GM12878 (cell line): ENCODE measurements at regions of chr1 and their contacts with region 1.

Region 1: DNA sequence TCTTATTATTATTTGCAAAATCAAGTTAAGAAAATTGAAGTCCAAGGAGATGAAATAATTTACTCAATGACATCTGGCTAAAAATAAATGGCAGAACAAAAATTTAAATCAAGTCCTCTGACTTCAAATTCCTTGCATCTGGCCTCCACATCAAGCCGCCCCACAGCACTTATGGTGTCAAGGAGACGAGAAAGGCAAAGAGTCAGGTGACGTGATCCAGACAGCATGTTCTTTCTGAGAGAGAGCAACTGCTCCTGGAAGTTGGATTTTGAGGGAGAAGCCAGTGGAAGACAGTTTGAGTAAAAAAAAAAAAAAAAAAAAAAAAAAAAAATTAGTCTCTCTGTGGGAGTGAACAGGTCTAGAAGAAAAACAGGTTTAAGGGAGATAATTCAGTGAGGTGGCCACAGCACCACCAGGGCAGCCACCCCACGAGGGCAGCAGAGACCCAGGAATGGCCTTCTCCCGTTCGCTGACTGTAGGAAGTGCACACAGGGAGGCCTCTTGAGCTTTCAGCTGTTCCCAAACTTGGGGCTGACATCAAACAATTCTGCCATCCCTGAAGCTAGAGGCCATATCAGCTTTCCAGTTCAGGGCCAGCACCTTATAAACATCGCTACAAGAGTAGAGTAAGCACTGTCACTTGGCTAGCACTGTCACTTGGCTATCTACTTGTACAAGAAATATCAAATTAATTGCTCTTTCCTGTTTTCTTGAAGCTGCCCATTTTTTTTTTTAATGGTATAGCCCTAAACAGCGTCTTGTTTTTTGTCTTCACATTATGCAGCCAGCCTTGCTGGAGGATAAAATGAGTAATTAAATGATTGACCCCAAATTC is 7.8 kb downstream of the C1orf162 start:
- DNase-seq: peak; percentile 48
- ATAC-seq: peak; percentile 88
- H3K4me3 ChIP-seq: no peak overlapping the region
- H3K27ac ChIP-seq: no peak overlapping the region
- H3K4me1 ChIP-seq: peaks cover 16% of the 10 kb centered on the region
- H3K27me3 ChIP-seq: no peaks in the 10 kb centered on the region
- CTCF ChIP-seq: peak; percentile 79 to 97 (median 83)
- EP300 ChIP-seq: no peak
- POLR2A ChIP-seq: no peak
- RAD21 ChIP-seq: peak; percentile 95

Region 2: DNA sequence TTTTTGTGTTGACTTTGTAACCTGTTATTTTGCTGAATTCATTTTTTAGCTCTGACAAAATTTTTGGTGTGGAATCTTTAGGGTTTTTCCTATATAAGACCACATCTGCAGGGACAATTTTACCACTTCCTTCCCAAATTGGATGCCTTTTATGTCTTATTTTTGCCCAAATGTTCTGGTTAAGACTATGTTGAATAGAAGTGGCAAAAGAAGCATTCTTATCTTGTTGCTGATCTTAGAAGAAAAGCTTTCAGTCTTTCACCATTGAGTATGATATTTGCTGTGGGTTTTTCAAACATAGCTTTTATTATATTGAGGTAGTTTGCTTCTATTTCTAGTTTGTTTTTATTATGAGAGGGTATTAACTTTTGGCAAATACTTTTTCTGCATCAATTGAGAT is 187.2 kb before region 1 on chr1:
- CTCF ChIA-PET with region 1: no interaction called
- POLR2A ChIA-PET with region 1: no interaction called
- RAD21 ChIA-PET with region 1: no interaction called
- SMC1A ChIA-PET with region 1: no interaction called
- in situ Hi-C with region 1: no loop called
- intact Hi-C with region 1: no loop called
- DNase-seq: no peak
- ATAC-seq: no peak
- H3K4me3 ChIP-seq: no peak overlapping the region
- H3K27ac ChIP-seq: no peak overlapping the region
- H3K4me1 ChIP-seq: no peaks in the 10 kb centered on the region
- H3K27me3 ChIP-seq: no peaks in the 10 kb centered on the region
- CTCF ChIP-seq: no peak
- EP300 ChIP-seq: no peak
- POLR2A ChIP-seq: no peak
- RAD21 ChIP-seq: no peak

Region 3: DNA sequence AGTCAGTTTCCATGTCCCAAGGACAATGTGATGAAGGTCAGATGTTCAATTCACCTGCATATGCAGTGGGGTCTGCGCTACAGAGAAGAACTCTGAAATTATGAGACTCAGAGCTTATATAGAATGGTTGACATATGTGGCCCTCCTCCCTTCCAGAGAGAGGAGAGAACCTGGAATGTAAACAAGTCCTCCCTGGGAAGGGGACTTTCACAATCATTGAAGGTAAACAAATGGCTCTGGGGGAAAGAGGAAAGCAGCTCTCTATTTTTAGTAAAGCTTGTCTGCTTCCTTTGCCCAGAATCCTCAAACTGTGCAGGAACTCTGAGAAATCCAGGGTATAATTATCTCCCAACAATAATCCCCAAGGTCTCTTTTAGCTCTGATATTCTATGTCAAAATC is 63.8 kb before region 1 on chr1:
- CTCF ChIA-PET with region 1: no interaction called
- POLR2A ChIA-PET with region 1: no interaction called
- RAD21 ChIA-PET with region 1: no interaction called
- SMC1A ChIA-PET with region 1: no interaction called
- in situ Hi-C with region 1: no loop called
- intact Hi-C with region 1: loop called (anchors 10 kb)
- DNase-seq: no peak
- ATAC-seq: no peak
- H3K4me3 ChIP-seq: no peak overlapping the region
- H3K27ac ChIP-seq: no peak overlapping the region
- H3K4me1 ChIP-seq: no peaks in the 10 kb centered on the region
- H3K27me3 ChIP-seq: no peaks in the 10 kb centered on the region
- CTCF ChIP-seq: no peak
- EP300 ChIP-seq: no peak
- POLR2A ChIP-seq: no peak
- RAD21 ChIP-seq: no peak

Region 4: GRCh38 chr1:111454859-111455641 is 26.6 kb before region 1 on chr1:
- CTCF ChIA-PET with region 1: interaction called, 14 read pairs
- POLR2A ChIA-PET with region 1: interaction called, 3 read pairs
- RAD21 ChIA-PET with region 1: interaction called, 12 read pairs
- SMC1A ChIA-PET with region 1: interaction called, 20 read pairs
- in situ Hi-C with region 1: no loop called
- intact Hi-C with region 1: no loop called
- DNase-seq: peak; percentile 24
- ATAC-seq: peak; percentile 77
- H3K4me3 ChIP-seq: peak overlapping the region; percentile 32
- H3K27ac ChIP-seq: peak overlapping the region; percentile 59
- H3K4me1 ChIP-seq: peaks cover 12% of the 10 kb centered on the region; the same call in 1 of the 2 replicates
- H3K27me3 ChIP-seq: no peaks in the 10 kb centered on the region
- CTCF ChIP-seq: no peak
- EP300 ChIP-seq: no peak
- POLR2A ChIP-seq: no peak
- RAD21 ChIP-seq: no peak

Region 5: DNA sequence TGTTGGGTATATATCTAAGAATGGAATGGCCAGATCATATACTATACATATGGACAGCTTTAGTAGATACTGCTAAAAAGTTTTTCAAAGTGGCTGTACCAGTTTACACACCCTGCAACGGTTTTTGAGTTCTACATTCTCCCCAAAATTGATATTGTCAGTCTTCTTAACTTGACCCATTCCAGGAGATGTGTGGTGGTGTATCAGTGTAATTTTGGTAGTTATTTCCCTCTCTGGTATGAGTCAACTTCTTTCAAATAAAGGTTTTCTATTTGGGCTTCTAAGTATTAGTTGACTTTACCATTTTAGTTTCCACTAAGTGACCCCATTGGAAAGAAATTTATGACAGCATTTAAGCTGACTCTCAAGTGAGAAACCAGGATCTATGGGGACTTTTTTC is 228.4 kb after region 1 on chr1:
- CTCF ChIA-PET with region 1: interaction called, 23 read pairs
- POLR2A ChIA-PET with region 1: interaction called, 4 read pairs
- RAD21 ChIA-PET with region 1: interaction called, 9 read pairs
- SMC1A ChIA-PET with region 1: interaction called, 5 read pairs
- in situ Hi-C with region 1: no loop called
- intact Hi-C with region 1: no loop called
- DNase-seq: no peak
- ATAC-seq: no peak
- H3K4me3 ChIP-seq: no peak overlapping the region
- H3K27ac ChIP-seq: no peak overlapping the region
- H3K4me1 ChIP-seq: peaks cover 3% of the 10 kb centered on the region; the same call in 1 of the 2 replicates
- H3K27me3 ChIP-seq: no peaks in the 10 kb centered on the region
- CTCF ChIP-seq: no peak
- EP300 ChIP-seq: no peak
- POLR2A ChIP-seq: no peak
- RAD21 ChIP-seq: no peak

Region 6: GRCh38 chr1:111747282-111747734 is 265.7 kb after region 1 on chr1:
- CTCF ChIA-PET with region 1: interaction called, 46 read pairs
- POLR2A ChIA-PET with region 1: no interaction called
- RAD21 ChIA-PET with region 1: interaction called, 12 read pairs
- SMC1A ChIA-PET with region 1: interaction called, 13 read pairs
- in situ Hi-C with region 1: loop called (anchors 5 kb)
- intact Hi-C with region 1: loop called (anchors 1 kb)
- DNase-seq: no peak
- ATAC-seq: peak; percentile 94
- H3K4me3 ChIP-seq: no peak overlapping the region
- H3K27ac ChIP-seq: no peak overlapping the region
- H3K4me1 ChIP-seq: no peaks in the 10 kb centered on the region; the same call in 1 of the 2 replicates
- H3K27me3 ChIP-seq: peaks cover 0 to 1% of the 10 kb centered on the region in 2 experiments; a peak in 1 of 4 replicates
- CTCF ChIP-seq: peak; percentile 63 to 88 (median 65)
- EP300 ChIP-seq: no peak
- POLR2A ChIP-seq: no peak
- RAD21 ChIP-seq: peak; percentile 62

Region 7: DNA sequence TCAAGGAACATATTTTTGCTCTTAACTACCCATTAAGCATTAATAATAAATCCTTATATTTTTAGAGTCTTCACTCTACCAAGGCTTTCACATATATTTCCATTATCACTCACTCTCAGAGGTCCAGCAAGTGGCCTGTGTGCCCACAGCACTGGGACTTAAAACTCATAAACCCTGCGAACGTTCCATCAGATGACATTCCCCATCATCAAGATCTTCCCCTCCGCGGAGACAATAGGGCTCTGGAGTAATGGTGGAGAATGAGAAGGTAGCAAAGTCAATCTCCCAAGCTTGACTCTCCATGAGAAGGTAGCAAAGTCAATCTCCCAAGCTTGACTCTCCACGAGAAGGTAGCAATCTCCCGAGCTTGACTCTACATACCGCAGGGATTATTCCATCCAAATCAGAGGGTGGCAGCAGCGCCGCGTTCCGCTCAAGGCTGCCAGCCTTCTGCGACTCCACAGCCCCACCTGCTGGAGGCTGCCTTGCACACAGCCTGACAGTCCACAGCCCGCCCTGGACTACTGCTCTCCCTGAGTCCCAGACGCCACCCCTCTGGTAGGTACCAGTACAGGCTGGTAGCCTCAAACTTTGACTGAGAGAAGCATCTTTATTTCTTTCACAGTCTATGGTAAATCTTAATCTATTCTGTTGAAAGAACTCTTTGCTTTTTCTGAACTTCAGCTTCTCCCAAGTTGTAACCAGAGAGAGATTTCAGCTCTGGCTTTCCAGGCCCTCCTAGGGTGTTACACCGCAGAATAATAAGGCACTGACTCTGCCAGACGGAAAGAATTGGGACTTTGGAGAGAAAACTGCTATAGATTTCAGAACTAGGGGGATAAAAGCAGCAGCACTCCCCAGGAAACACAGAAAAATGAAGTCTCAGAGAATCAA is 888.0 kb after region 1 on chr1:
- CTCF ChIA-PET with region 1: no interaction called
- POLR2A ChIA-PET with region 1: no interaction called
- RAD21 ChIA-PET with region 1: no interaction called
- SMC1A ChIA-PET with region 1: no interaction called
- in situ Hi-C with region 1: loop called (anchors 25 kb)
- intact Hi-C with region 1: no loop called
- DNase-seq: no peak
- ATAC-seq: peak; percentile 100
- H3K4me3 ChIP-seq: no peak overlapping the region
- H3K27ac ChIP-seq: no peak overlapping the region
- H3K4me1 ChIP-seq: no peaks in the 10 kb centered on the region
- H3K27me3 ChIP-seq: no peaks in the 10 kb centered on the region; a peak in 2 of 4 replicates
- CTCF ChIP-seq: peak; percentile 96 to 99 (median 99); a peak in 5 of 6 replicates
- EP300 ChIP-seq: no peak
- POLR2A ChIP-seq: no peak
- RAD21 ChIP-seq: peak; percentile 80